AG04449 (cell line): ENCODE measurements at regions of chr4 and their contacts with region 1.

Region 1: DNA sequence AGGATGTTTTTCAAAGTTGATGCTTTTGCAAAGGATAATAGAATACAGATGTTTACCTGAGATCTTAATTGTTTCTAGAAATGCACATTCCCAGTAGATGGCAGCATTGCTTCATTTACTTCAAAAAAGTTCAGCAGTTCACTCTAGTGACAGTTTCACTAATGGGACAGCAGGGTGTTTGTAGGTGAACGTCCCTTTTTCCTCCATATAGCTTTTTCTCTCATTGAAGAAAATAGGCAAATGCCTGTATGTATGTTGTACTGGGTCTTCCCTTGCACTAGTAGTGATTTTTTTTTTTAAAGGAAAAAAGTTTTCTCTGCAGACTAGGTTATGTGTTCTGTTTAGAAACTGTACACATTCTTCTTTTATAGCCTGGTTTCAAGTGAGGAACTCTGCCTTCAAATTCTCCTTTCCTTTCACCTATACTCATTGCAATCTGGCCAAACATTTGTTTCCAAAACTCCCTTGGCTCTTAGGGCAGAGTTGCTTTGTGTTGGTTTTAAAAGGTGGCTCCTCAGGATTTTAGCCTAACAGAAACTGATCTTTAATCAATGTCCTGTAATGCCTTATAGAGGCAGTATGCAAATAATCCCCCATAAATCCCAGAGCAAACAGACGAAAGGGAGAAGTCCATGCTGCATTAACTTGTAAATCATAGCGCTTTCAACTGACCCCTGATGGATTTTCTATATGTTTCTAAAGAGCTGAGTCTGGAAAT is 86.3 kb downstream of the EGF start:
- DNase-seq: no peak
- H3K4me3 ChIP-seq: no peak overlapping the region
- CTCF ChIP-seq: peak; percentile 34

Region 2: DNA sequence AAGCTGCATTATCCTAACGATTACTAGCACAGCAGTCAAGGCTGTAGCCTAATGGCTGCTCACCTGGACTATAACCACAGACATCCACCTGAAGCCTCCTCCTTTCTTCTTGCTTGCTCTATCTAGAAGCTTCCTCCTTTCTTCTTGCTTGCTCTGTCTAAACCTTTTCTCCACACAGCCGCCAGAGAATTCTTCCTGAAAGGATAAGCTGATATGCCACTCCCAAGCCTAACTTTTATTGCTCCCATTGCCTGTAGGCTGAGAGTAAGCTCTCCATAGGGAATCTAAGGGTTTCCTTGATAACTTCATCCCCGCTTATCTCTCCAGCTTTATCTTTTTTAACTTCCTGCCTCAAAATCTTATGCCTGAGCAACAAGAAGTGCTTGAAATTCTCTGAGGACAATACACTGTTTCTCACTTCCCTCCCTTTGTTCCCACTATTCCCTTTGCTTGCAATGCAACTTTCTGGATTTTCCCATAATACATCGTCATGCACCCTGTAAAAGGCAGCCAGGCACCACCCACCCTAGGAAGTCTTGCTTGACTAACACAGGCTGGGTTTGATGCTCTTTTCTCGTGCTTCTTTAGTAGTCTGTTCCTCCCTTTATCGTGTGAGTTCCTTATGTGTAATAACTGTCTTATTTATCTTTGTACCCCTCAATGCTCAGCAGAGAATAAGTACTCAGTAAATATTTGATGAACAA is 152.5 kb before region 1 on chr4:
- CTCF ChIA-PET with region 1: no interaction called
- POLR2A ChIA-PET with region 1: no interaction called
- DNase-seq: no peak
- H3K4me3 ChIP-seq: no peak overlapping the region
- CTCF ChIP-seq: no peak

Region 3: DNA sequence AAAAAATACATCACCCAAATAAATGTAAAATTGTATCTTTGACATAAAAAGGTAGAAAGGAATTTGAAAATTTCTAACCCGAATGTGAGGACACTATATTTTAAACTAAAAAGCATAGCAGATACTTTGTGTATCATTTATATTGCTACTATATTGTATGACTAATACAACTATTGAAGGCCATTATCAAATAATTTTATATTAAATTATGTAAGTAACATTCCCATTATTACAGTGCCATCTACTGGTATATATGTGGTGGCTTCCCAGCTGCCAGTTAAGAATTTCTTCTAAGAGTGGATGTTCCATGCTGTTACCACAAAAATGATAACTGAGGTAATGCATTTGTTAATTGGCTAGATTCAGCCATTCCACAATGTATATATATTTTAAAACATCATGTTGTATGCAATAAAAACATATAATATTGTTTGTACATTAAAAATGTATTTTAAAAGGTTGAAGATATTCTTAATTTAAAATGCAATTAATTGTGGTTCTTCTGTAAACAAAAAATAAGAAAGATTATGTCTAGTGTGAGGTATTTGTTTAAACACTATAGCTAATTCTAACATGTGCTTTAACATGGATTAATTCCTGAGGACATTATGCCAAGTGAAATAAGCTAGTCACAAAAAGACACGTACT is 21.0 kb before region 1 on chr4:
- CTCF ChIA-PET with region 1: interaction called, 29 read pairs
- POLR2A ChIA-PET with region 1: no interaction called
- DNase-seq: no peak
- H3K4me3 ChIP-seq: no peak overlapping the region
- CTCF ChIP-seq: peak; percentile 38

Region 4: GRCh38 chr4:110013904-110014632 is 15.0 kb after region 1 on chr4:
- CTCF ChIA-PET with region 1: interaction called, 14 read pairs
- POLR2A ChIA-PET with region 1: no interaction called
- DNase-seq: no peak
- H3K4me3 ChIP-seq: no peak overlapping the region
- CTCF ChIP-seq: no peak

Region 5: DNA sequence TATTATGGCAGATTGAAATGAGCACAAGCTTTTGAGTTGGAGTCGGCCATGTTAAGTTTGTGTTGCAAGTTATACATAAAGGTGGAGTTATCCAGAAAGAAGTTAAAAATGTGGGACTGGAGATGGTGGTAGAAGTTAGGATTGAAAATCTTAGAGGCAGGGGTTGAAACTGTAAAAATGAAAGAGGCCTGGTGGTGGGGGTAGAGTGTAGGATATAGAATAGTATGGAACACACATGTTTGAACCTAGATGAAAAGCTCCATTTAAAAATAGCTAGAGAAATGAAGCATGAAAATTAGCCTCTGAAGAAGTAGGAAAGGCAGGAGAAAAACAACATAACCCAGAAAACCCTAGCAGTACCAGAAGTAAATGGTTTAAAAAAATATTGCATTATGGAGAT is 345.1 kb after region 1 on chr4:
- CTCF ChIA-PET with region 1: interaction called, 14 read pairs
- POLR2A ChIA-PET with region 1: no interaction called
- DNase-seq: no peak
- H3K4me3 ChIP-seq: no peak overlapping the region
- CTCF ChIP-seq: peak; percentile 4

Region 6: GRCh38 chr4:110533940-110534339 is 534.9 kb after region 1 on chr4:
- CTCF ChIA-PET with region 1: interaction called, 11 read pairs
- POLR2A ChIA-PET with region 1: no interaction called
- DNase-seq: peak; percentile 97
- H3K4me3 ChIP-seq: no peak overlapping the region
- CTCF ChIP-seq: no peak